ENCODE measurements at regions of chr15 and their contacts with region 1.

Region 1: DNA sequence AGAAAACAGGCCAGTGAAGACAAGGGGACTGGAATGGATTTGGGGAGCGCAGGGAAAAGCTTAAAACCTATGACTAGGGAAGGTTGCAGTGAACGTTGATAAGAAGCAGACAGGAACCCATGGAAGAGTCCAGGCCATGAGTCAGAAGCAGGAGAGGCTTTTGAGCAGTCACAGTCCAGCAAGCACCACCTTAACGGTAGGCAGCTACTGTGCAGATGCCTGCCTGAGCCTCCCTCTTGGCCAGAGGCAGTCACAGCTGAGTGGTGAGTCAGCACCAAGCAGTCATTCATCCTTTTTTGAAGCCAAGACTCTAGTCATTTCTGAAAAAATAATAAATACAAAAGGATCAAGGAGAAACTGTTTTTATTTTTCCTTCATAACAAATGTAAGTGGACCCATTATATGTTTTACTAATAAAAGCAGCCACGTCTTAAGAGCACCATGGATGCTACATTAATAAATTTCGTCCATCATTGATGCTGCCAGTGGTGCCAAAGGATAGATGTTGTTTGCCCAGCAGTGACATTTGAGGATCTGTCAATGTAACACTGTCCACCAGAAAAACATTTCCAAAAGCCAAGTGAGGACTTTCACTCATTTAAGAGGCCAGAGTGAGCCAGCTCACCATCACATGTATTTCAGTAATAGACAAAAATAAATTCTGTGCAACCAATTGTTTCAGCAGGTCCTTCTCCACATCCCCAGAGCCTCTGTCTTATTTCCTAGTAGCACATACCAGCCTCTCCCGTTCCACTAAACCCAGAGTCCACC is 42.1 kb upstream of the ACTC1 start:
- DNase-seq: peak; percentile 84
- H3K4me3 Mint-ChIP-seq: no peak overlapping the region
- H3K27ac Mint-ChIP-seq: no peak overlapping the region
- H3K4me1 Mint-ChIP-seq: no peaks in the 10 kb centered on the region
- H3K27me3 Mint-ChIP-seq: no peaks in the 10 kb centered on the region
- CTCF ChIP-seq: no peak

Region 2: DNA sequence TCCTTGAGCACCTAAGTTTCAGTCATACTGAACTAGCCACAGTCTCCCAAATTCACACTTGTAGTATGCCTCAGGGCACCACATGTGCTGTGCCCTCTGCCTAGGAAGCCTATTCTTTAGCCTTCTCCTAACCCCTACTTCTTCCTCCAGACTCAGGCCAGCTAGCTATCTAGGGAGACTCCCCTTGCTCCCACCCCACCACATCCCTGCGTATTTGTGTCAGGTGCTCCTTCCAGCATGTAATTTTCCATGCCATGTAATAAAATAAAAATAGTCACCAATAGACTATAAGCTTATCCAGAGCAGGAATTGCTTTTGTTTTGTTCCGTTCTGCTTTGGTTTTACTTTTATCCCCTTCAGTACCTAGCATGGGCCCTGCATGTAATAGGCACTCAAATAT is 67.7 kb before region 1 on chr15:
- CTCF ChIA-PET with region 1: no interaction called
- POLR2A ChIA-PET with region 1: no interaction called
- intact Hi-C with region 1: no loop called
- DNase-seq: no peak
- H3K4me3 Mint-ChIP-seq: no peak overlapping the region
- H3K27ac Mint-ChIP-seq: no peak overlapping the region
- H3K4me1 Mint-ChIP-seq: peaks cover 21% of the 10 kb centered on the region
- H3K27me3 Mint-ChIP-seq: peaks cover 32% of the 10 kb centered on the region
- CTCF ChIP-seq: no peak

Region 3: DNA sequence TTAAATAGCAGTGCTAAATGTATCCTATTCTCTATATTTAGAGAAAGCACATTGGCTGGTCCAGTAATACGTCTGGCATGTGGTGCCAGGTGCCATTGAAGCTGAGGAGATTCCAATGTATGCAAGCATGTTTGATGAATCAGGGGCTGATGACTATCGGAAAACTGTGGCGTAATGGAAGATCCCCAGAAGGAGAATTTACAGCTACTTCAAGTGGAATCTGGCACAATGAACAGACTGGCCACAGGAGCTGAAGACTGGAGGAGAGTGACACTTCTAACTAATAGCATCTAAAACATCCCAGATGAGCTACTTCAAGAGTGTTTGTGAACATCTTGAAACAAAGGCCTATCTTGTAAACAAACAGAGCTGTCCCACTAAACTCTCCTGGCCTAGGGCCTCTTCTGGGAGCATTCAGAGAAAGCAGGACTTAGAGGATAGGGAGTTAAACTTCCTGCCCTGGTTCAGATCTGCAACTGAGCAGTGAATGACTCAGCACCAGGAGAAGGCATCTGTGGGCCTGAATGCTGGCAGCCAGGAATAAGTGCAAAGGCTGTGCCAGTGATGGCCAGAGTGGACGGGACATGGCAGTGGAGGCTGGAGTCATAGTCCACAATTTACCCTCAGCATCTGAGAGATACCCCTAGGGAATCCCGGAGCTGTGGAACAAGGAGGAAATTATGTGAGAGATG is 26.8 kb before region 1 on chr15:
- CTCF ChIA-PET with region 1: no interaction called
- POLR2A ChIA-PET with region 1: interaction called, 7 read pairs
- intact Hi-C with region 1: loop called (anchors 1 kb)
- DNase-seq: peak; percentile 86
- H3K4me3 Mint-ChIP-seq: peak overlapping the region; percentile 49
- H3K27ac Mint-ChIP-seq: peak overlapping the region; percentile 96
- H3K4me1 Mint-ChIP-seq: peaks cover 26% of the 10 kb centered on the region
- H3K27me3 Mint-ChIP-seq: no peaks in the 10 kb centered on the region
- CTCF ChIP-seq: no peak

Region 4: GRCh38 chr15:35028235-35028984 is 191.0 kb after region 1 on chr15:
- CTCF ChIA-PET with region 1: no interaction called
- POLR2A ChIA-PET with region 1: no interaction called
- intact Hi-C with region 1: no loop called
- DNase-seq: no peak
- H3K4me3 Mint-ChIP-seq: no peak overlapping the region
- H3K27ac Mint-ChIP-seq: no peak overlapping the region
- H3K4me1 Mint-ChIP-seq: peaks cover 11% of the 10 kb centered on the region
- H3K27me3 Mint-ChIP-seq: no peaks in the 10 kb centered on the region
- CTCF ChIP-seq: no peak